MCF 10A (cell line): ENCODE measurements at regions of chr21 and their contacts with region 1.

Region 1: GRCh38 chr21:36203617-36203917 is 46.9 kb downstream of the DOP1B start:
- DNase-seq: peak; percentile 85
- H3K4me3 Mint-ChIP-seq: no peak overlapping the region
- H3K27ac Mint-ChIP-seq: peak overlapping the region; percentile 41
- H3K4me1 Mint-ChIP-seq: peaks cover 19% of the 10 kb centered on the region
- H3K27me3 Mint-ChIP-seq: no peaks in the 10 kb centered on the region
- CTCF ChIP-seq: no peak

Region 2: DNA sequence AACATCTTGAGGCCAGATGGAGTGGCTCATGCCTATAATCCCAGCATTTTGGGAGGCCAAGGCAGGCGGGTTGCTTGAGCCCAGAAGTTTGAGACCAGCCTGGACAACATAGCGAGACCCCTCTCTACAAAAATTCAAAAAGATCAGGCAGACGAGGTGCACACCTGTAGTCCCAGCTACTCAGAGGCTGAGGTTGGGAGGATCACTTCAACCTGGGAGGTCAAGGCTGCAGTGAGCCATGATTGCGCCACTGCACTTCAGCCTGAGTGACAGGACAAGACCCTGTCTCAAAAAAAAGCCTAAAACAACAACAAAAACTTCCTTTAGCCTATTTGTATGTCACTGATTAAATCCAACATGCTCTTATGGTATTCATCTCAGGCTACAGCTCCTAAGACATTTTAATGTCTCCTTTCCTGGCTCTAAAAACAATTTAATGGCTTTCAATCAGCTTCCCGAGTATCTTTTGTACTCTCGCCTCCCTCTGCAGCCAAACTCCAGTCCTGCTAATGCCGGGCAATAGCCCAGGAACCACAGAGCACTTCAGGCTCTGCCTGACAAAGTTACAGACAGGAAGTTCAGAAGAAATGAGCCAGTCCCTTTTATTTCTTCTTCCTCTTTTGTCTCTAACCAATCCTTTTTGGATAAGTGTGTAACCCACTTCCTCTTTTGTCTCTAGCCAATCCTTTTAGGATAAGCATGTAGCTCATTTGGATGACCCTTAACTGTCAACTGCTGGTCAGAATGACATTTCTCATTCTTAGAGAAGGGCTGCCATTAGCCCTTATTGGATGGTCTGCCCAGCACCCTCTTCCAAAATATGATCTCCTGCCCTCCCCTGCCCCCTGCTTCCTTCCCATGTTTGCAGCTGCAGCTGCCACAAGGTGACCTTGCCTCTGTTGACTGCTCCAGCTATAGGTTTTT is 53.5 kb before region 1 on chr21:
- CTCF ChIA-PET with region 1: interaction called, 108 read pairs
- POLR2A ChIA-PET with region 1: interaction called, 21 read pairs
- intact Hi-C with region 1: no loop called
- DNase-seq: no peak
- H3K4me3 Mint-ChIP-seq: no peak overlapping the region
- H3K27ac Mint-ChIP-seq: no peak overlapping the region
- H3K4me1 Mint-ChIP-seq: peaks cover 10% of the 10 kb centered on the region
- H3K27me3 Mint-ChIP-seq: no peaks in the 10 kb centered on the region
- CTCF ChIP-seq: no peak

Region 3: DNA sequence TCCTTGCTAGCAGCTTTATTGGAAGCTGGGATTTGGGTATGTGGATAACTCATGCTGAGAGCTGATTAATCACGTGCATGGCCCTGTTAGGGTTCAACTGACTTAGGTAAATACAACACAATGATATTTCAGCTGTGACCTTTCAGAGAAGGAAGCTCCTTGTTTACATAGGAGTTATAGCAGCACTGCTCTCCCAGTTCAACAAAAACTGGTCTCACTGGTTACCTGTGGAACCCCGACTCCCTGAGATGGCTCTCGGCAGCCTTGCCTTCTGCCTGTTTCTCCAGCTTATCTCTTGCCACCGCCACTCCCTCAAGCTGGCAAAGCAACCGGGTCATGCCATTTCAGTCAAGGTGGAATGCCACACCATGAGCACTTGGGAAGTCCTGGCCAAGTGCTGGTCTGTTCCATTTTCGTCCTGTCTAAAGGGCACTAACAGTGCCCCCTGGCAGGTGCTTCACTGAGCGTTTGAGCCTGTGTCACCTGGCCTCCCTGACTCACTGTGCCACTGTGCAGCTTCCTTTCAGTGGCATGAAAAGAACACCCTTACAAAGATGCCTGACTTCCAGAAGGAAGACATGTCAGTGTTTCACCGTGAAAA is 15.4 kb before region 1 on chr21:
- CTCF ChIA-PET with region 1: interaction called, 10 read pairs
- POLR2A ChIA-PET with region 1: interaction called, 12 read pairs
- intact Hi-C with region 1: no loop called
- DNase-seq: no peak
- H3K4me3 Mint-ChIP-seq: no peak overlapping the region
- H3K27ac Mint-ChIP-seq: no peak overlapping the region
- H3K4me1 Mint-ChIP-seq: peaks cover 4% of the 10 kb centered on the region
- H3K27me3 Mint-ChIP-seq: no peaks in the 10 kb centered on the region
- CTCF ChIP-seq: no peak

Region 4: GRCh38 chr21:36218691-36219090 is 15.1 kb after region 1 on chr21:
- CTCF ChIA-PET with region 1: no interaction called
- POLR2A ChIA-PET with region 1: no interaction called
- intact Hi-C with region 1: no loop called
- DNase-seq: no peak
- H3K4me3 Mint-ChIP-seq: no peak overlapping the region
- H3K27ac Mint-ChIP-seq: no peak overlapping the region
- H3K4me1 Mint-ChIP-seq: no peaks in the 10 kb centered on the region
- H3K27me3 Mint-ChIP-seq: no peaks in the 10 kb centered on the region
- CTCF ChIP-seq: no peak